ENCODE measurements at regions of chr3 and their contacts with region 1.

Region 1: GRCh38 chr3:72847751-72848702 is at the start of gene SHQ1:
- DNase-seq: peak; percentile 90 to 98 (median 95)

Region 2: DNA sequence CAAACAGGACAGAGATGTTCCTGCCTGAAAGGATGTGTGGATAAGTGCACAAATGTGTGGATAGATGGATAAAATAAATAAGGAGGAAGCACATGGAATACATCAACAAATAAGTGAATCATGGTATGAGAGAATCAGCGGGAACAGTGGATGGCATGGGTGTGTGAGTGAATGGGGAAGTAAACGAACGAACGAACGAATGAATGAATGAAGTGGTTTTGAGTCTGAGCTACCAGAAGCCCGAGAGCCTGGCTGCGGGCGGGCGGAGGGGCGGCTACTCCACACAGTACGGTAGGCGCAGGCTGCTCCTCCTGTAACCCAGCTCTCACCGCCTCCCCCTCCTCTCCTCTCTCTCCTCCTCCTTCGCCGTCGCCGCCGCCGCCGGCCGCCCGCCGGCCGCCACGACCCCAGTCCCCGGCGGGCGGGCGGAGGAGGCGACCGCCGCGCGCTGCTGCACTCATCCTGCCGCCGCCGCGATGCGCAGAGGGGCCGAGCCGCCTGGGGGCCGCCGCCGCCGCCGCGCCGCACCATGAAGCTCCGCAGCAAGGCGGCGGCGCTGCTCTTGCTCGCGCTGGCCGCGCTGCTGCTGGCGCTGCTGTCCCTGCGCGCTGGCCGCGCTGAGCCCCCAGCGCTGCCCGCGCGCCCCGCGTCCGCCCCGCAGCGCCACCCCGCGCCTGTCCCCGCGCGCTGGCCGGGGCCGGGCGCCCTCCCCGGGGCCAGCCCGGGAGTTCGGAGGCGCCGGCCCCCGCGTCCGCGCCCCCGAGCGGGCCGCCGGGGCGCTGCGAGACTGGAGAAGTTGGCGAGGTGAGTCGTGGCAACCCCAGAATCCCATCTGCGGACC is 39.9 kb after region 1 on chr3 and contains the start of gene GXYLT2:
- intact Hi-C with region 1: loop called (anchors 5 kb)
- DNase-seq: peak; percentile 48 to 95 (median 84)

Region 3: DNA sequence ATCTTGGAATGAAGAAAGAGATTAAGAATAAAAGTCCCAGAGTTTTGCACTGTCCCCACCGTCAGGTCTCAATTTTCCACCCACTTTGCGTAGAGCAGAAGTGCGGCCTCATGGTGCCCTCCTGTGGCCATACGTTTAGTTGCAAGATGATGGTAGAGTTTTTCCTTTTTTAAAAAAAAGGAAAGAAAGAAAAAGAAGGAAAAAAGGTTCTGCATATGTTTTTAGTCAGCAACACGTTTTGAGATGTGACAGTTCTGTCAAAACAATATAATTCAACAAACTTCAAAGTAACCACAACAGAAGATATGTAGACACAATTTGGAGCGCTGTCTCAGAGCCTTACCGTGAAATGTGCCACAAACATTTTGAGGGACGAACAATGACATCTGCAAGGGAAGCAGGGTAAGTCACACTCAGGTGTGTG is 238.1 kb after region 1 on chr3:
- intact Hi-C with region 1: loop called (anchors 10 kb)
- DNase-seq: peak in 41 of 42 donors; percentile 19 to 85 (median 58)

Region 4: DNA sequence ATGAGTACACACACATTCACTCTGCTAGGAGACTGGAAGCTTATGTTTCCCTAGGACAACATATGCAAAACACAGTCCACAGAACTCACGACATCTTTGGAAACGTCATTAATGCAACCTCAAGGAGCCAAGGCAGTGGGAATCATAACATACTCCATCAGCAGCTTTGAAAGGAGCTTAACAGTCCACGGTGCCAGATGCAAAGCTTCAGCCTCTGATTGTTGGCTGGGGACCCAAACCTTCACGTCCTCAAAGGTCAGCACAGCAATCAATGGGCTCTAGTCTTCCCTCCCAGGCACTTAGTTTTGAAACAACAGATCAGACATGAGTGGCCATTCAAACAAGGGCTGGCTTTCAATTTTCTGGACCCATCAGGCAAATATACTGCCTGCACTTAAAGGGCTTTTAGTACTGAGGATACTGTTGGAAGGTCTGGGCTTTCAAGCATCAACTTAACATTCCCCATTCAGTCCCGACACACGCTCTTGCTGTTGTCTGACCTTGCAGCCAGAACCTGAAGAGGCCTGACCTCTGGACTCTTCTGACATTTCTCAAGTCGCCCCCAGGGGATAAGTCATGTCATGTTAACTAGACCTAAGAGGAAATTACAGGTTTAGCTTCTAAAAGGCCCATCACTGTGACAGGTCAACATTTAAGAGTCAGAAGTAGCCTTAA is 553.7 kb after region 1 on chr3:
- intact Hi-C with region 1: no loop called
- DNase-seq: no peak

Measured in head of caudate nucleus (tissue), 42 donors.